GM12878 (cell line): ENCODE measurements at regions of chr18 and their contacts with region 1.

Region 1: DNA sequence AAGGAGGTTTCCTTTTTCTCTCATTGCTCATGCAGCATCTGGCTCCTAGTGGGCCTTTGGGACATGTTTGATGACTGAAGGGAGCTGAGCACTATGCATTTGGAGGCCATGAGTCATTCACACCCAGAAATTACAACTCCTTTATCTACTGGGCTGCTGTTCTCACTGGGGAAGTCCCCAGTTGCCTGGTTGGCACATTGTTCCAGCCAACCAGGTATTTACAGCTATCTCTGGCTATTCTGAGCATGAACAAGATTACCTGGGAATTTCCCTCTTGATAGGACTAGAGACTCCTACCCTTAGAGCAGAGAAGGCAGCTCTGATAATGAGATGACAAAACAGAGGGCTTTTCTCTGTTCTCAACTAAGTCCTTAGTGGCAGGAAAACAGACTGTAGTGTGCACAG is 206.5 kb downstream of the SETBP1 start:
- DNase-seq: peak; percentile 69
- ATAC-seq: peak; percentile 95
- H3K4me3 ChIP-seq: no peak overlapping the region
- H3K27ac ChIP-seq: peak overlapping the region; percentile 36
- H3K4me1 ChIP-seq: peaks cover 14% of the 10 kb centered on the region
- H3K27me3 ChIP-seq: no peaks in the 10 kb centered on the region
- CTCF ChIP-seq: no peak
- EP300 ChIP-seq: 0 out of 4 replicates have a peak, but pooled peaks of 1 of the 2 experiments have one; percentile 44
- POLR2A ChIP-seq: no peak
- RAD21 ChIP-seq: no peak

Region 2: GRCh38 chr18:44796442-44797428 is 90.5 kb before region 1 on chr18:
- CTCF ChIA-PET with region 1: interaction called, 4 read pairs
- POLR2A ChIA-PET with region 1: interaction called, 3 read pairs
- RAD21 ChIA-PET with region 1: interaction called, 16 read pairs
- SMC1A ChIA-PET with region 1: interaction called, 14 read pairs
- in situ Hi-C with region 1: no loop called
- intact Hi-C with region 1: loop called (anchors 5 kb)
- DNase-seq: no peak
- ATAC-seq: peak; percentile 70
- H3K4me3 ChIP-seq: no peak overlapping the region
- H3K27ac ChIP-seq: no peak overlapping the region
- H3K4me1 ChIP-seq: peaks cover 24% of the 10 kb centered on the region
- H3K27me3 ChIP-seq: no peaks in the 10 kb centered on the region
- CTCF ChIP-seq: no peak
- EP300 ChIP-seq: no peak
- POLR2A ChIP-seq: no peak
- RAD21 ChIP-seq: no peak

Region 3: DNA sequence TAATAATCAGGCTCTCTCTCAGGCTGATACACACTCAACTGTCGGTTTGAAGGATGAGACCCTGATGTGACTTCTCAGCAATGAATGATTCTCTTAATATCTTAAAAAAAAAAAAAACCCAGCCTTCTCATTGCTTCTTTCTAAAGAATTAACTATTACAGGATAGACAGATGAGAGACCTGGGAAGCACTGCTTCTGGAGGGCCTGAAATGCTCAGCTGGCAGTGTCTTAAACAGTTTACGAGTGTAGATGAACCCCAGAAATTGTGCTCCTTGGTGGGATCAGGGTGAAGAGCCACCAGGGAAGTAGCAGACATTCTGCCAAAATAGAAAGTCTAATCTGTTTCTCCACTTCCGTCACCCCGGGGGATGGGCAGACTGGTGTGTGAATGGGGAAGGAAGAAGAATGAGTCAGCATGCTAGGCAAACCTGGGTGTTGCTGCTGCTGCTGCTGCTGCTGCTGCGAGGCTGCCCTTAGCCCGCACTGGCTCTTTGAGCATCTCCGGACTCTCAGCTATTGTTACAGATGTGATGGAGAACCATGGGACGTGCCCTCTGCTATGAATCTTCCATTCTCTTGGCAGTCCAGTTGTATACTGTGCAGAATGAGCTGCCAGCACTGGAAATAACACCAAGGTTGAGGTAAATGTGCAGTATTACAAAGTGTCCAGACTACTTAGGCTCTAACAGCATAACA is 48.1 kb before region 1 on chr18:
- CTCF ChIA-PET with region 1: interaction called, 4 read pairs
- POLR2A ChIA-PET with region 1: interaction called, 3 read pairs
- RAD21 ChIA-PET with region 1: interaction called, 7 read pairs
- SMC1A ChIA-PET with region 1: interaction called, 24 read pairs
- in situ Hi-C with region 1: no loop called
- intact Hi-C with region 1: no loop called
- DNase-seq: peak; percentile 64
- ATAC-seq: peak; percentile 96
- H3K4me3 ChIP-seq: peak overlapping the region; percentile 18; the same call in 1 of the 2 replicates
- H3K27ac ChIP-seq: peak overlapping the region; percentile 40
- H3K4me1 ChIP-seq: peaks cover 23% of the 10 kb centered on the region
- H3K27me3 ChIP-seq: no peaks in the 10 kb centered on the region
- CTCF ChIP-seq: no peak
- EP300 ChIP-seq: 0 out of 4 replicates have a peak, but pooled peaks of 1 of the 2 experiments have one; percentile 44
- POLR2A ChIP-seq: no peak
- RAD21 ChIP-seq: no peak

Region 4: GRCh38 chr18:44901283-44901682 is 14.1 kb after region 1 on chr18:
- CTCF ChIA-PET with region 1: interaction called, 8 read pairs
- POLR2A ChIA-PET with region 1: interaction called, 5 read pairs
- RAD21 ChIA-PET with region 1: interaction called, 9 read pairs
- SMC1A ChIA-PET with region 1: interaction called, 28 read pairs
- in situ Hi-C with region 1: no loop called
- intact Hi-C with region 1: no loop called
- DNase-seq: no peak
- ATAC-seq: peak; percentile 52; the same call in 2 of the 3 replicates
- H3K4me3 ChIP-seq: no peak overlapping the region
- H3K27ac ChIP-seq: no peak overlapping the region
- H3K4me1 ChIP-seq: no peaks in the 10 kb centered on the region
- H3K27me3 ChIP-seq: no peaks in the 10 kb centered on the region
- CTCF ChIP-seq: 0 out of 6 replicates have a peak, but pooled peaks of 1 of the 3 experiments have one; percentile 26
- EP300 ChIP-seq: no peak
- POLR2A ChIP-seq: no peak
- RAD21 ChIP-seq: peak; percentile 32; the same call in 1 of the 2 replicates

Region 5: DNA sequence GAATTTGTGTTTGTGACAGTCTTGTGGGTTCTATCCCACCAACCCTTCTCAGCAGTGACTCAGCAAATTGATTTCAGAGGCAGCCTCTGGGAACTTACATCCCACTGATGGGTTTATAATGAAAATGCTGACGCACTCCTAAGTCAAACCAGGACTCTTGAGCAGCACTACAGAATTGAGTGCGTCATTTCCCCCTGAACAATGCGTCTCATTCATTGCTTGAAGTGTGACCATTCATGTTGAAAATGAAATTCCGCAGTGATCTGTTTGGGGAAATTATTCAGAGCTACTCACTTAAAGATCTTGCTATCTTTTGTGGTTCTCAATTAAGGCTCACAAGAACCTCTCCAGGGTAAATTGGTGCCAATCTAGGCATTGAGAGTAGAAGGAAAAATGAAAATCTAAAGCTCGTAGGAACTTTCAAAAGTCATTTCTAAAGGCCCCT is 310.3 kb after region 1 on chr18:
- CTCF ChIA-PET with region 1: interaction called, 3 read pairs
- POLR2A ChIA-PET with region 1: interaction called, 3 read pairs
- RAD21 ChIA-PET with region 1: interaction called, 8 read pairs
- SMC1A ChIA-PET with region 1: interaction called, 13 read pairs
- in situ Hi-C with region 1: no loop called
- intact Hi-C with region 1: no loop called
- DNase-seq: peak; percentile 88
- ATAC-seq: peak; percentile 98
- H3K4me3 ChIP-seq: no peak overlapping the region
- H3K27ac ChIP-seq: peak overlapping the region; percentile 42; the same call in 1 of the 2 replicates
- H3K4me1 ChIP-seq: peaks cover 7% of the 10 kb centered on the region; the same call in 1 of the 2 replicates
- H3K27me3 ChIP-seq: no peaks in the 10 kb centered on the region
- CTCF ChIP-seq: no peak
- EP300 ChIP-seq: peak; percentile 99 to 100
- POLR2A ChIP-seq: no peak
- RAD21 ChIP-seq: no peak